GM12878 (cell line): ENCODE measurements at regions of chr17 and their contacts with region 1.

Region 1: DNA sequence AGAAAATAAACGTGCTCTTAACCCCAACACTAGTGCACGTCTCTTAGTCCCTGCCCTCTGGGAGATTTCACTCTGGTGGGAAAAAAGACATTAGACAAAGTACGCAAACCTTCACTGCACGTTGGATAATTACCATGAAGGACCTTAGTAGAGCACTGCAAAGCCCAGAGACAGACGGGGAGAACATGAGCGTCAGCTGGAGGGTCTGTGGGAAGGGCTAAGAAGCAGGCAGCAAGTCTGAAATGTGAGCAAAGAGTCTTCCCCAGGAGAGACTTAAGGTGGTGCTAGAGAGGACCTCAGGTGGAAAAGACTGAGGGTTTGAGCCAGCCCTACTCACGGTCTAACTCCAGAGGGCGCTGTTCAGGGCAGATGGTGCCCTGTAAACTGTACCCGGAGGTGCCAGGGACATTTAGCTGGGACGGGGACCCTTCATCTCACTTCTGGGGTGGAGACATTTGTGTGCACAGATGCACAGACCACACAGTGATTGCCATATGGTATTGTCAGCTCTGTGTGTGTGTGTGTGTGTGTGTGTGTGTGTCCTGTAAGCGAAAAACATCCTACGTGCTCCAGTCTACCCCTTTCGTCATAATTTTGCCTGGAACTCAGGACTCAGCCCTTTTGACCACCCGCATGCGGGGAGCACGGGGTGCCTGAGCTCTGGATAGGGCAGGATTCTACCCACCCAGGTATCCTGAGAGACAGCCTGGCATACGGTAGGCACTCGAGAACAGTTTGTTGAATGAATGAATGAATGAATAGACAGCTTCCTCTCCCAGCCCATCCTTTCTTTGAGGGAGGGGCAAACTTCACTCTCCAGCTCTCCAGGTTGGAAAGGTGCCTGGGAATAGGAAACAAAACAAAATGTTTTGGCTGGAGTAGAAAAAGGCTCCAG is 10.1 kb upstream of the STAC2 start:
- DNase-seq: peak; percentile 24
- ATAC-seq: peak; percentile 88
- H3K4me3 ChIP-seq: no peak overlapping the region
- H3K27ac ChIP-seq: no peak overlapping the region
- H3K4me1 ChIP-seq: no peaks in the 10 kb centered on the region
- H3K27me3 ChIP-seq: no peaks in the 10 kb centered on the region; a peak in 3 of 4 replicates
- CTCF ChIP-seq: peak; percentile 63 to 95 (median 86)
- EP300 ChIP-seq: no peak
- POLR2A ChIP-seq: no peak
- RAD21 ChIP-seq: peak; percentile 31; the same call in 1 of the 2 replicates

Region 2: GRCh38 chr17:39001703-39002637 is 233.8 kb before region 1 on chr17:
- CTCF ChIA-PET with region 1: no interaction called
- POLR2A ChIA-PET with region 1: no interaction called
- RAD21 ChIA-PET with region 1: no interaction called
- SMC1A ChIA-PET with region 1: no interaction called
- in situ Hi-C with region 1: no loop called
- intact Hi-C with region 1: no loop called
- DNase-seq: no peak
- ATAC-seq: no peak
- H3K4me3 ChIP-seq: no peak overlapping the region
- H3K27ac ChIP-seq: no peak overlapping the region
- H3K4me1 ChIP-seq: no peaks in the 10 kb centered on the region
- H3K27me3 ChIP-seq: peaks cover 0 to 5% of the 10 kb centered on the region in 2 experiments; a peak in 3 of 4 replicates
- CTCF ChIP-seq: no peak
- EP300 ChIP-seq: no peak
- POLR2A ChIP-seq: no peak
- RAD21 ChIP-seq: no peak

Region 3: DNA sequence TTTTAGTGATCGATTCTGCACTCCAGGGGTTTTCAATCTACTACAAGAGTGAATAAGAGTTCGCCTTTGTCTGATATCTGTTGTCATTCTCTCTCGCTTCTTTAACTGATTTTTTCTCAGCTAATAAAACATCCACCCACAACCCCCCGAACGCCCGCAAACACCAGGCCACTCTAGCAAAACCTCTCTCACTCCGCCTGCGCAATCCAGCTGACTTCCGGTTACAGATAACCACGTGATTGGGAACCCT is 36.1 kb before region 1 on chr17:
- CTCF ChIA-PET with region 1: interaction called, 658 read pairs
- POLR2A ChIA-PET with region 1: interaction called, 7 read pairs
- RAD21 ChIA-PET with region 1: interaction called, 160 read pairs
- SMC1A ChIA-PET with region 1: no interaction called
- in situ Hi-C with region 1: no loop called
- intact Hi-C with region 1: no loop called
- DNase-seq: peak; percentile 81
- ATAC-seq: peak; percentile 65
- H3K4me3 ChIP-seq: peak overlapping the region; percentile 95
- H3K27ac ChIP-seq: peak overlapping the region; percentile 100
- H3K4me1 ChIP-seq: peaks cover 27% of the 10 kb centered on the region
- H3K27me3 ChIP-seq: no peaks in the 10 kb centered on the region
- CTCF ChIP-seq: no peak
- EP300 ChIP-seq: no peak
- POLR2A ChIP-seq: no peak
- RAD21 ChIP-seq: no peak

Region 4: GRCh38 chr17:39209317-39210092 is 26.3 kb before region 1 on chr17:
- CTCF ChIA-PET with region 1: interaction called, 658 read pairs
- POLR2A ChIA-PET with region 1: interaction called, 11 read pairs
- RAD21 ChIA-PET with region 1: interaction called, 160 read pairs
- SMC1A ChIA-PET with region 1: interaction called, 69 read pairs
- in situ Hi-C with region 1: loop called (anchors 5 kb)
- intact Hi-C with region 1: loop called (anchors 1 kb)
- DNase-seq: no peak
- ATAC-seq: peak; percentile 12
- H3K4me3 ChIP-seq: peak overlapping the region; percentile 34; the same call in 1 of the 2 replicates
- H3K27ac ChIP-seq: no peak overlapping the region; the same call in 1 of the 2 replicates
- H3K4me1 ChIP-seq: peaks cover 27% of the 10 kb centered on the region
- H3K27me3 ChIP-seq: peaks cover 2 to 3% of the 10 kb centered on the region in 2 experiments; a peak in 1 of 4 replicates
- CTCF ChIP-seq: no peak
- EP300 ChIP-seq: no peak
- POLR2A ChIP-seq: peak; percentile 41; the same call in 1 of the 2 replicates
- RAD21 ChIP-seq: no peak